Left ventricle myocardium superior (tissue), 1 donor: ENCODE measurements at regions of chr2 and their contacts with region 1.

Region 1: DNA sequence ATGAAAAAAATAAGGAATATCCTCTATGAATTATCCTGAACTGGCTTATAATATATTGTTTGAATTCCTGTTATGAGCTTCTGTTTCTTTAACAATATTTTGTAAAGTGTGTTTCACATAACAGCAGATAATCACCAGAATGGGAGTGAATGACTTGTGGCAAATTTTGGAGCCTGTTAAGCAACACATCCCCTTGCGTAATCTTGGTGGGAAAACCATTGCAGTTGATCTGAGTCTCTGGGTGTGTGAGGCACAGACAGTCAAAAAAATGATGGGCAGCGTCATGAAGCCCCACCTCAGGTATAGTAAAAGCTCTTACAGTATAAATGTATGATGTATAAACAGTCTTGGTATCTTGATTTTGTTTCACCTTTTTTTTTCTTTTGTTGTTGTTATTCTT is 5.9 kb downstream of the GEN1 start:
- DNase-seq: no peak
- ATAC-seq: no peak

Region 2: GRCh38 chr2:17821535-17822444 is 62.0 kb after region 1 on chr2:
- intact Hi-C with region 1: loop called (anchors 10 kb)
- DNase-seq: no peak
- ATAC-seq: peak; percentile 68